ENCODE measurements at regions of chr13 and their contacts with region 1.

Region 1: GRCh38 chr13:27353166-27353583 is 71.2 kb upstream of the GTF3A start:
- DNase-seq: no peak
- H3K4me3 ChIP-seq: no peak overlapping the region
- H3K27ac ChIP-seq: no peak overlapping the region
- H3K4me1 ChIP-seq: no peaks in the 10 kb centered on the region
- H3K27me3 ChIP-seq: peaks cover 2 to 5% of the 10 kb centered on the region in 2 experiments
- CTCF ChIP-seq: no peak
- POLR2A ChIP-seq: no peak

Region 2: DNA sequence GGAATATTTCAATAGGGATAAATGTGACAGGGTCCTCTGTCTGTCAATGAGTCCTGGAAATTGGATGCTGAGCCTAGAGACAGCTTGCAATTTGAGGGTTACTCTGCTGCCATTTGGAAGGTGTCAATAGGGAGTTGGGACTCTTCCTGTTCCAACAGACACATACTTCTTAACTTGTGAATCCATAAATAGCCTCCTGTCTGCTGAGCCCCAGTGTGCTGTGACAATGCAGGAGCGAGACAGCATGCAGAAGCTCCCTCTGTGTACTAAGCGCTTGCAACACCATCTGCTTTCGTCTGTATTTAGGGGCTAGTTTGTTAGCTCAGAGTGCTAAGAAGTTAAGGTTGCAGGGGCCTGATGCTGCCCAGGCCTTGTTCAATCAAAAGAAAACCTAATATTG is 534.1 kb before region 1 on chr13:
- CTCF ChIA-PET with region 1: no interaction called
- POLR2A ChIA-PET with region 1: no interaction called
- dilution Hi-C with region 1: no loop called
- intact Hi-C with region 1: no loop called
- DNase-seq: no peak
- H3K4me3 ChIP-seq: no peak overlapping the region
- H3K27ac ChIP-seq: no peak overlapping the region
- H3K4me1 ChIP-seq: no peaks in the 10 kb centered on the region
- H3K27me3 ChIP-seq: no peaks in the 10 kb centered on the region
- CTCF ChIP-seq: no peak
- POLR2A ChIP-seq: no peak

Region 3: DNA sequence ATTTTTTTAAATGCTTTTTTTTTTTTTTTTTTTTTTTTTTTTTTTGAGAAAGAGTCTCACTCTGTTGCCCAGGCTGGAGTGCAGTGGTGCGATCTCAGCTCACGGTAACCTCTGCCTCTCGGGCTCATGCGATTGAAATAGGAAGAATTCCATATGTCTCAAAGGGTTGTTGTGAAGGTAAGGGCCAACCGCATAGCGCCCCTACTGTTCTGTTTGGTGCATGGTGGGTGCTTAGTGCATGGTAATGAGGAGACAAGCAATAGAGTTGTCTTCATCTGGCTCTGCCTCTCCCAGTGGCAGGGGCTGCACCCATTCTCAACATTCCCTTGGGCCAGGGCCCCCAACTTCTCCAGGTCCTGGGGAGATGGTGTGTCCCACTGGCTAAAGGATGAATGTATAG is 13.9 kb before region 1 on chr13:
- CTCF ChIA-PET with region 1: interaction called, 26 read pairs
- POLR2A ChIA-PET with region 1: no interaction called
- dilution Hi-C with region 1: no loop called
- intact Hi-C with region 1: no loop called
- DNase-seq: peak; percentile 58
- H3K4me3 ChIP-seq: no peak overlapping the region
- H3K27ac ChIP-seq: no peak overlapping the region
- H3K4me1 ChIP-seq: no peaks in the 10 kb centered on the region
- H3K27me3 ChIP-seq: peaks cover 3 to 6% of the 10 kb centered on the region in 2 experiments
- CTCF ChIP-seq: peak; percentile 45 to 77
- POLR2A ChIP-seq: no peak

Region 4: GRCh38 chr13:27425917-27426630 is 72.9 kb after region 1 on chr13:
- CTCF ChIA-PET with region 1: no interaction called
- POLR2A ChIA-PET with region 1: no interaction called
- dilution Hi-C with region 1: no loop called
- intact Hi-C with region 1: no loop called
- DNase-seq: peak; percentile 84
- H3K4me3 ChIP-seq: peak overlapping the region in 2 of 3 experiments; percentile 14 to 66
- H3K27ac ChIP-seq: peak overlapping the region; percentile 69
- H3K4me1 ChIP-seq: peaks cover 25% of the 10 kb centered on the region
- H3K27me3 ChIP-seq: no peaks in the 10 kb centered on the region
- CTCF ChIP-seq: peak in 1 of 2 donors; percentile 60
- POLR2A ChIP-seq: no peak

Measured in endothelial cell of umbilical vein (primary cell).